AG04450 (cell line): ENCODE measurements at regions of chr1 and their contacts with region 1.

Region 1: GRCh38 chr1:37682334-37682987 is 9.9 kb upstream of the CDCA8 start:
- DNase-seq: peak; percentile 37
- H3K4me3 ChIP-seq: no peak overlapping the region
- H3K27ac ChIP-seq: no peak overlapping the region
- H3K27me3 ChIP-seq: peaks cover 4% of the 10 kb centered on the region
- CTCF ChIP-seq: peak; percentile 94

Region 2: GRCh38 chr1:37449936-37450335 is 232.5 kb before region 1 on chr1:
- CTCF ChIA-PET with region 1: interaction called, 36 read pairs
- POLR2A ChIA-PET with region 1: no interaction called
- DNase-seq: no peak
- H3K4me3 ChIP-seq: no peak overlapping the region
- H3K27ac ChIP-seq: no peak overlapping the region
- H3K27me3 ChIP-seq: peaks cover 7% of the 10 kb centered on the region
- CTCF ChIP-seq: no peak

Region 3: DNA sequence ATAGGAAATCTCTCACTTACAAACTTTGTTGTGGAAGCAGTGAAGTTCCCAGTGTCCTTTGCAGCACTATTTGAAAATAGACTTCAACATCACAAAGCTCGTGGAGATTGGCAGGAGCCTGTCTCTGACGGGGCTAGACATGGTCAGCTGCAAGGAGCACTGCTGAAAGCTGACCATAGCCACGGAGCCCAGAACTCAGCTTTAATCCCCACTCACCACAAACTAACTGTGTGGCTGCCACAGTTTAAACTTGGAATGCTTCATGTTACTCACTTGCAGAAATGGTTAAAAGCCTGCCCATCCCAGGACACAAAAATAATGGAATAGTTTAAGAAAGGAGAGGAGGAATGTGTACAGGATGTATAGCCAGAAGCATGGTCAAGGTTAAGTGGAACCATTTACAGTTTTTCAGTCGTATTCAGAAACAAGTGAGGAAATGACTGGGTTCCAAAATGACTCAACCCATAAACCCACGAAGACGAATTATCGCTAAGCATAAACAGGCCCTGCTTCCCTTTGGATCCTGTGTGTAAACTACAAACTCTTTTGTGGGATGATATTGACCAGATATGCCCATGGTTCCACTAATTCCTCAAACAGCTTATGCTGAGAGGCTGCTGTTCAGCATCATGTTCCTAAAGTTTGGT is 107.5 kb before region 1 on chr1:
- CTCF ChIA-PET with region 1: interaction called, 21 read pairs
- POLR2A ChIA-PET with region 1: no interaction called
- DNase-seq: peak; percentile 58
- H3K4me3 ChIP-seq: no peak overlapping the region
- H3K27ac ChIP-seq: peak overlapping the region; percentile 76
- H3K27me3 ChIP-seq: no peaks in the 10 kb centered on the region
- CTCF ChIP-seq: no peak

Region 4: DNA sequence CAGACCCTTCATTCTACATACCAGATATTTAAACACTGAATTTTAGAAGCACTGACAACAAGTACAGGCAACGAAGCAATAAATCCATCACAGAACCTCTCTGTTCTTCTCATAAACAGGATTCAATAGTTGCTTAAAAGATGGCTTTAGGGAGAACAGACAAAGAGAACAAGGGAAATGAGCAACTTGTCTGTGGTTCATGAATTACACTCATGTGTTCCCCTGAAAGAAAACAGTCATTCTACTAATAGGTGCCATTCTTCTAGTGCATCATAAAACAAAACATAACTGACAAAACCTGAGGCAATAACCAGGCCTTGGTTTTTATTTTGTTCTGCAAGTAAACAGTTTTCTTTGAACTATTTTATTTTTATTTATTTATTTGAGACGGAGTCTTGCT is 93.5 kb before region 1 on chr1:
- CTCF ChIA-PET with region 1: interaction called, 10 read pairs
- POLR2A ChIA-PET with region 1: no interaction called
- DNase-seq: no peak
- H3K4me3 ChIP-seq: no peak overlapping the region
- H3K27ac ChIP-seq: no peak overlapping the region
- H3K27me3 ChIP-seq: no peaks in the 10 kb centered on the region
- CTCF ChIP-seq: no peak

Region 5: DNA sequence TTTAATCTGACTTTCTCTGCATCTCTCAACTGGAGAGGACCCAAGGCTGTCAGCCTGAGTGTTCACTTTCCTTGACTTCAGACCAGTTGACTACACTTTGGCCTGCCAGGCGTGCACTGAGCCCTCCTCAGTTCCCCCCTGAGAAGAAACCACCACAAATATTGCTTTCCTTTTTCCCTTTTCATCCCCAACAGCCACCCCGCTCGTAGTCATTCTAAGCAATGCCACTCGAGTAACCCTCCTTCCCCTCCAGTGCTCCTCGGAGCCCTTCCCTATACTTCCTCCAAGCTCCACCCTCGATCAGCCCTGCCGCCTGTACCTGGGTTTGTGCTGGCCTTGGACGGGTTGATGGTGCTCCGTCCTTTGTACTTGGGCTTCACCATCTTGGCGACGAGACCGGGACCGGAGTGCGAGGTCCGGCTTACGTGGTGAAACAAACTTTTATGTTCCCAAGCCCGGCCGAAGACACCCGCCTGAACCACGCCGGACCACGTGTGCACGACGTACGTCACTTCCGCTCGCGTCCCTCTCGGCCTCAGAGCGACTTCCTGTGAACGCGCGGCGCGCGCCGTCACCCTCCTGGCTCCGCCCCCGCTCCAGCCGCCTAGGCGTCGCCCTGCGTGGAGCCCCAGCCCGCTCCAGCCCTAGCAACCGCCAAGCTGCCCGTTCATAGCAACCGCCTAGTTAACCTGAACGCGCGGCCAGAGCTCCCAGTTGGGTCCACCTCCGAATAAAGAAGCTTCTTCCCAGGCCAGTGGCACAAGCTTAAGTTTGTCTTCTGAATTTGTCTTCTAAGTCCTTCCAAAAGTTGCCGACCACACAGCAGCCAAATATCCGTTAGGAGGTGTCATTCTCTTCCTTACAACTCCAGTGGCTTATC is 86.8 kb before region 1 on chr1 and contains the start of gene GNL2:
- CTCF ChIA-PET with region 1: interaction called, 378 read pairs
- POLR2A ChIA-PET with region 1: interaction called, 9 read pairs
- DNase-seq: peak; percentile 85
- H3K4me3 ChIP-seq: peak within 1 kb of the TSS; percentile 98
- H3K27ac ChIP-seq: peak within 1 kb of the TSS; percentile 73
- H3K27me3 ChIP-seq: peaks cover 8% of the 10 kb centered on the region
- CTCF ChIP-seq: no peak
- polyA plus RNA-seq, gene GNL2: 52.5 and 64.7 TPM in 2 replicates

Region 6: GRCh38 chr1:37703061-37703460 is 20.6 kb after region 1 on chr1:
- CTCF ChIA-PET with region 1: no interaction called
- POLR2A ChIA-PET with region 1: no interaction called
- DNase-seq: no peak
- H3K4me3 ChIP-seq: no peak overlapping the region
- H3K27ac ChIP-seq: no peak overlapping the region
- H3K27me3 ChIP-seq: no peaks in the 10 kb centered on the region
- CTCF ChIP-seq: no peak